Left cardiac atrium (tissue), 4 donors: ENCODE measurements at regions of chr15 and their contacts with region 1.

Region 1: GRCh38 chr15:48800811-48801455 is 9.9 kb downstream of the CEP152 start:
- DNase-seq: no peak
- ATAC-seq: peak; percentile 47 to 50

Region 2: DNA sequence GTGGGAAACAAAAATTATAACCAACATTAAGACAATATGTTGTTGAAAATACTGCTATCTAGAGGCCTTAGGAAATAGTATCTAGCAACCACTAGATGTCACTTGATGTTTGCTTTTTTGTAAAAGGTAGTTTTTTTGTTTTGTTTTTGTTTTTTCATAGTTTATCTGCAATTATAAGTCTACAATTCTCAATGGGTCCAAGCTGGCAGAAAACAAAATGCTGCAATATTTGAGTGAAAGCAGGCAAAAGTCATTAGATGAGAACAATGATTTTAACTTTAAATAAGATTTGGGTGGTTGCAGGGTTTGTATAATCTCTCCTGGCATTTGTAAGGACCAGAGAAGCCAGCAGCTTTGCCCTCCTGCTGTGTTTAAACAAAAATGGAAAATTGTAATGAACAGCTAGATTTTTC is 442.7 kb before region 1 on chr15:
- intact Hi-C with region 1: loop called (anchors 5 to 10 kb)
- DNase-seq: no peak
- ATAC-seq: peak; percentile 48 to 58